Activated naive CD8-positive, alpha-beta T cell treated with anti-CD3 and anti-CD28 coated beads, Interleukin-2, amount 10 ng/mL, durations not matched to agents 7 days and 5 days (primary cell): ENCODE measurements at regions of chr3 and their contacts with region 1.

Region 1: GRCh38 chr3:51995346-51996163 is at the start of gene RPL29:
- DNase-seq: peak; percentile 85
- ATAC-seq: peak; percentile 91
- H3K4me3 Mint-ChIP-seq: peak within 1 kb of the TSS; percentile 100
- H3K27ac Mint-ChIP-seq: peak within 1 kb of the TSS; percentile 100
- H3K4me1 Mint-ChIP-seq: peaks cover 29% of the 10 kb centered on the region
- H3K27me3 Mint-ChIP-seq: peaks cover 19% of the 10 kb centered on the region
- total RNA-seq, gene RPL29: 1,076 to 1,089 TPM

Region 2: GRCh38 chr3:51982782-51983577 is 12.6 kb before region 1 on chr3 and contains the start of gene ACY1:
- POLR2A ChIA-PET with region 1: interaction called, 49 read pairs
- DNase-seq: peak; percentile 84
- ATAC-seq: peak; percentile 80
- H3K4me3 Mint-ChIP-seq: peak within 1 kb of the TSS; percentile 94
- H3K27ac Mint-ChIP-seq: peak within 1 kb of the TSS; percentile 87
- H3K4me1 Mint-ChIP-seq: peaks cover 15% of the 10 kb centered on the region
- H3K27me3 Mint-ChIP-seq: no peaks in the 10 kb centered on the region
- total RNA-seq, gene ACY1: 15.8 to 17.1 TPM

Region 3: DNA sequence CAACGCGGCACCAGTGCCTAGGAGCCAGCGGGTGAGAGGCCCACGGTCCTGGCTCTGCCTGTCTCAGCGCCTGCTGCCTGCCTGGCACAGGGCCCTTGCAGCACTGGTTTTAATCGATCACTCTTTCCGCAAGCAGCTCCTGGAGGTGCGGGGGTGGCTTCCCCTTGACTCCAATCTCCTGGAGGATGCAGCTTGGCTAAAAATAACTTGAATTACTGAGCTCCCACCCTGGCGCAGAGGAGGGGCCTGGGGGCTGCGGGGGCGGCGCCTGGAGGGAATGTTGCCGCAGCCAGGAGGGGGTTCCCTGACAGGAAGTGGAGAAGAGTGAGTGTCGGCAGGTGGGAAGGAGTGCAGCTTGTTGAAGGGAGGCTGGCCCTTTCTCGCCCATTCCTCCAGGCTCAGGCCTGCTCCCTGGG is 10.0 kb after region 1 on chr3:
- POLR2A ChIA-PET with region 1: no interaction called
- DNase-seq: no peak
- ATAC-seq: no peak
- H3K4me3 Mint-ChIP-seq: no peak overlapping the region
- H3K27ac Mint-ChIP-seq: no peak overlapping the region
- H3K4me1 Mint-ChIP-seq: peaks cover 11% of the 10 kb centered on the region
- H3K27me3 Mint-ChIP-seq: peaks cover 2% of the 10 kb centered on the region

Region 4: DNA sequence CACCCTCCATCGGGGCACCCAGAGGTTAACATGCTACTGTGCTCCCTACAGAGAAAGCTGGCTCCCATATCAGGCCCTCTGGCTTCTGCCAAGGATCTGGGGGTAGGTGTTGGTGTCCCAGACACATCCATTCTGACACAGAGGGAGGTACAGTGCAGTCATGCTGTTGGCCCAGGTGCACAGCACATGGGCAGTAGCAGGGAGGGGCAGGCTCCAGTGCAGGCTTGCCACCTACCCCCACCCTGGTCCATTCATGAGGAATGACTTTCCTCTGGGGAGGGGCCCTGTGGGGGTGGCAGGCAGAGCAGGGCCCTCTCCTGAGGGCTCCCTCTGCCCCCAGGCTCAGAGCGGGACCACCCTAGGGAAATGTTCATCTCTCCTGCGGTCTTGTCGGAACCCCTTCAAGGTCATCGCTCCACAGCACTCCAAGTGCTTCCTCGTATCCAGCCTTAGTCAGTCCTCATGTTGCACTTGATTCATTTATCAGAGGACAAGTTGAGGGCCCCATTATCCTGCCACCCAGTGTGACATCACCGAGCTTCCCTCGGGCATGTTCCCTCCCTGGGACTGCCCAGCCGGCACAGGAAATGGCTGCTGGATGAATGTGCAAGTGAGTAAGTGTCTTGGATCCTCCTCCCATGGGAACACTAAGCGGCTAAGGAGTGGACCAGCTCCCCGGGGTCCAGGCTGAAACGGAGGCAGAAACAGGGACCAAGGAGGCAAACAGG is 50.8 kb after region 1 on chr3:
- POLR2A ChIA-PET with region 1: no interaction called
- DNase-seq: no peak
- ATAC-seq: no peak
- H3K4me3 Mint-ChIP-seq: no peak overlapping the region
- H3K27ac Mint-ChIP-seq: no peak overlapping the region
- H3K4me1 Mint-ChIP-seq: peaks cover 9% of the 10 kb centered on the region
- H3K27me3 Mint-ChIP-seq: no peaks in the 10 kb centered on the region

Region 5: GRCh38 chr3:52056968-52057805 is 61.6 kb after region 1 on chr3:
- POLR2A ChIA-PET with region 1: interaction called, 20 read pairs
- DNase-seq: peak; percentile 96
- ATAC-seq: peak; percentile 75
- H3K4me3 Mint-ChIP-seq: peak overlapping the region; percentile 86
- H3K27ac Mint-ChIP-seq: peak overlapping the region; percentile 85
- H3K4me1 Mint-ChIP-seq: peaks cover 29% of the 10 kb centered on the region
- H3K27me3 Mint-ChIP-seq: no peaks in the 10 kb centered on the region

Region 6: GRCh38 chr3:52154117-52155094 is 158.9 kb after region 1 on chr3 and contains the start of gene POC1A:
- POLR2A ChIA-PET with region 1: interaction called, 10 read pairs
- DNase-seq: peak; percentile 93
- ATAC-seq: peak; percentile 93
- H3K4me3 Mint-ChIP-seq: peak within 1 kb of the TSS; percentile 94
- H3K27ac Mint-ChIP-seq: peak within 1 kb of the TSS; percentile 93
- H3K4me1 Mint-ChIP-seq: peaks cover 22% of the 10 kb centered on the region
- H3K27me3 Mint-ChIP-seq: peaks cover 3% of the 10 kb centered on the region
- total RNA-seq, gene POC1A: 20.8 to 22.4 TPM